PC-3 (cell line): ENCODE measurements at regions of chr4 and their contacts with region 1.

Region 1: DNA sequence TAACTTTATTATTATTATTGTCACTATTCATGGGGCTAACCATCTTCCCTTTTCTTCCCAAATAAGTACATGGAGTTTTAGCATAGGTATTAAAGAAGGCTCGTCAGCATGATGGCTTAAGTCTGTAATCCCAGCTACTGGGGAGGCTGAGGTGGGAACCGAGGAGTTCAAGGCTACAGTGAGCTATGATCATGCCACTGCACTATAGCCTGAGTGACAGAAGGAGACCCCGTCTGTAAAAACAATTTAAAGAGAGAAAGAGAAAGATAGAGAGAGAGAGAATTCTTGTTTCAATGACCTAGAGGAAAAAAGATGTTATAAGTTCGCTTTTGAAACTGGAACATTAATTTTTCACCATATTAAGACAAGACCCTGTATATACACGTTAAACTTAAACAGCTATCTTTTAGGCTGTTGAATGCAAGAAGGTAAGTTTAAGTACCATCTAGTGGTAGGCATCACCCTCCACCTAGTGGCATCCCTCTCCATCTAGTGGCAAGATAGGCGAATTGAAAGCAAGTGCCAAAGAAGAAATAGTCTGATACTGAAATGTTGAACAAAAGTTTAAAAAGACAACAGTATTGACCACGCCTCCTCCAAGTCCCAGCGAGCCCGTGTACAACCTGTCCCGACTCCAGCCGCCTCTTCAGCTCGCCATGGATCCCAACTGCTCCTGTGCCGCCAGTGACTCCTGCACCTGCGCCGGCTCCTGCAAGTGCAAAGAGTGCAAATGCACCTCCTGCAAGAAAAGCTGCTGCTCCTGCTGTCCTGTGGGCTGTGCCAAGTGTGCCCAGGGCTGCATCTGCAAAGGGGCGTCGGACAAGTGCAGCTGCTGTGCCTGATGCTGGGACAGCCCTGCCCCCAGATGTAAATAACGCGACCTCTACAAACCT is 26.0 kb upstream of the YTHDC1 start:
- DNase-seq: peak; percentile 96
- ATAC-seq: peak; percentile 87
- H3K4me3 ChIP-seq: peak overlapping the region; percentile 73
- H3K27ac ChIP-seq: no peak overlapping the region
- H3K4me1 ChIP-seq: peaks cover 25% of the 10 kb centered on the region
- H3K27me3 ChIP-seq: no peaks in the 10 kb centered on the region
- CTCF ChIP-seq: peak; percentile 97

Region 2: GRCh38 chr4:68271851-68272756 is 103.8 kb before region 1 on chr4:
- CTCF ChIA-PET with region 1: interaction called, 36 read pairs
- POLR2A ChIA-PET with region 1: no interaction called
- intact Hi-C with region 1: loop called (anchors 1 kb)
- DNase-seq: peak; percentile 81
- ATAC-seq: peak; percentile 72
- H3K4me3 ChIP-seq: peak overlapping the region; percentile 59
- H3K27ac ChIP-seq: no peak overlapping the region
- H3K4me1 ChIP-seq: peaks cover 20% of the 10 kb centered on the region
- H3K27me3 ChIP-seq: no peaks in the 10 kb centered on the region
- CTCF ChIP-seq: peak; percentile 89

Region 3: GRCh38 chr4:68324519-68325262 is 51.2 kb before region 1 on chr4:
- CTCF ChIA-PET with region 1: interaction called, 3 read pairs
- POLR2A ChIA-PET with region 1: interaction called, 19 read pairs
- intact Hi-C with region 1: loop called (anchors 1 kb)
- DNase-seq: no peak
- ATAC-seq: no peak
- H3K4me3 ChIP-seq: no peak overlapping the region
- H3K27ac ChIP-seq: no peak overlapping the region
- H3K4me1 ChIP-seq: no peaks in the 10 kb centered on the region
- H3K27me3 ChIP-seq: no peaks in the 10 kb centered on the region
- CTCF ChIP-seq: no peak

Region 4: GRCh38 chr4:68349649-68350360 is 26.1 kb before region 1 on chr4 and contains the start of gene YTHDC1:
- CTCF ChIA-PET with region 1: interaction called, 3 read pairs
- POLR2A ChIA-PET with region 1: interaction called, 4 read pairs
- intact Hi-C with region 1: loop called (anchors 1 kb)
- DNase-seq: peak; percentile 99
- ATAC-seq: peak; percentile 87
- H3K4me3 ChIP-seq: peak within 1 kb of the TSS; percentile 93
- H3K27ac ChIP-seq: peak within 1 kb of the TSS; percentile 78
- H3K4me1 ChIP-seq: peaks cover 33% of the 10 kb centered on the region
- H3K27me3 ChIP-seq: no peaks in the 10 kb centered on the region
- CTCF ChIP-seq: 0 out of 2 replicates have a peak, but pooled peaks have one; percentile 9
- total RNA-seq, gene YTHDC1: 47.6 and 55.5 TPM in 2 replicates

Region 5: DNA sequence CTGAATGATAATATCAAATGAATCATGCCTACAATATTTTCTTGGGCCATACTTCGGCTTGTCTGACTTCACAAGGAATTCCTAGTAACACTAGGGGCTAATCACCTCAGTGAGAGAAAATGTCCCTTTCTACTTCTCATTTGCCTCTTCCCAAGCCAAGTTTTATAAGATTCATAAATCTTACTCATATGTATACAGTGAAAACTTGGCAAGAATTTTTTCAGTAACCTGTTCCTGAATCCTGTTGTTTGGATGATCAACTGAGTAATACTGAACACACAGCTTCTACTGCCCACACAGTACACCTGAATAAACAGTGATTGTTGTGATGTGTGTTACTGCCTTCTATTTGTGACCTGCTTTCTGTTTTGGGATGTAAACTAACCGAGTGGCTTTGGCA is 87.9 kb after region 1 on chr4:
- CTCF ChIA-PET with region 1: interaction called, 5 read pairs
- POLR2A ChIA-PET with region 1: no interaction called
- intact Hi-C with region 1: loop called (anchors 5 kb)
- DNase-seq: peak; percentile 98
- ATAC-seq: peak; percentile 81
- H3K4me3 ChIP-seq: peak overlapping the region; percentile 15; the same call in 1 of the 2 replicates
- H3K27ac ChIP-seq: peak overlapping the region; percentile 61
- H3K4me1 ChIP-seq: peaks cover 55% of the 10 kb centered on the region
- H3K27me3 ChIP-seq: no peaks in the 10 kb centered on the region
- CTCF ChIP-seq: no peak

Region 6: DNA sequence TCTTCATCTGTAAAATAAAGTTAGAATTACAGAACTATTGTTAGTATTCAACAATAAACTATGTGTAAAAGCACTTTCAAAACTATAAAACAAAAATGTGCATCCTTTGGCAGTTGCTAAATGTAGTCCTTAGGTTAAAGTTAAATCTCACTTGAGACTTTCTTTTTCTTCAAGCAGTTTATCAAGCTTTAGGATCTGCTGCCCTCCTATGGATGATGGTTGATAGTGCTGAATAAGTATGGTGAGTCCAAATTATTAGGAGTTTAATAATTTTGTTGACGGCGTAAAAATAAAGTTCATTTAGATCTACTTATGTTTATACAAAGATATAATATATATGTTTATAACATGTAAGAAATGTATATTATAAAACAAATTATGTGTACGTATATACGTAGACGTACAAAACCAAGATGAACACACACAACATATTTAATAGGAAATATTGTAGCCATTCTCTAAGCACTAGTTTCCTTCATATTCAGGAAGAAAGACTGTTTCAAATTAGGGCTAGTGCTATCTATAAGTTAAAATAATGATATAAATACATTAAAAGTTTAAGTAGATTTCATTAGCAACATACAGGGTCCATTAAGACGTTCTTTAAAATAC is 1241.3 kb after region 1 on chr4:
- CTCF ChIA-PET with region 1: no interaction called
- POLR2A ChIA-PET with region 1: no interaction called
- intact Hi-C with region 1: loop called (anchors 2 kb)
- DNase-seq: peak; percentile 76
- ATAC-seq: peak; percentile 51
- H3K4me3 ChIP-seq: no peak overlapping the region
- H3K27ac ChIP-seq: no peak overlapping the region
- H3K4me1 ChIP-seq: no peaks in the 10 kb centered on the region
- H3K27me3 ChIP-seq: peaks cover 11% of the 10 kb centered on the region; the same call in 1 of the 2 replicates
- CTCF ChIP-seq: peak; percentile 83